ENCODE measurements at regions of chr14 and their contacts with region 1.

Region 1: DNA sequence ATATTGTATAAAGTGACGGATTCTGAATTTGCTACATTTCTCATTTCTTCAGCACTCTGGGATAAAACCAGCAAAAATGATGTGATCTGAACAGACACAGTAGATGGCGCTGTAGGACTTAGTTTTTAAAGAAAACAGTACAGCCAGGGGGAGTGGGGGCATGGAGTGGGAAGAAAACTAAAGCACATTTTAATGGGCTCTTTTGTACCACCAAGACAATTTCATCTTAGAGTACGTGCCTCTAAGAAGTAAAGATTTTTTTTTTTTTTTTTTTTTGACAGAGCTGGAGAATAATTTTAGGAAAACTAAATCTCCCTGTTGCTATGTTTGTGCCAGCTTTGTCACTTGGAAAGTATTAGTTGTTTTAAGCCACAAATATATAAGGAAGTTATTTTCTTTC is 124.4 kb downstream of the RAD51B start:
- DNase-seq: peak; percentile 71
- ATAC-seq: peak; percentile 82
- H3K4me3 ChIP-seq: no peak overlapping the region
- H3K27ac ChIP-seq: peak overlapping the region; percentile 88; the same call in 1 of the 2 replicates
- H3K4me1 ChIP-seq: peaks cover 21 to 42% of the 10 kb centered on the region in 2 experiments
- H3K27me3 ChIP-seq: no peaks in the 10 kb centered on the region
- CTCF ChIP-seq: peak; percentile 56 to 83 (median 74); a peak in 5 of 6 replicates
- POLR2A ChIP-seq: no peak
- RAD21 ChIP-seq: peak; percentile 89

Region 2: GRCh38 chr14:68042608-68043210 is 98.8 kb after region 1 on chr14:
- CTCF ChIA-PET with region 1: no interaction called
- POLR2A ChIA-PET with region 1: no interaction called
- RAD21 ChIA-PET with region 1: no interaction called
- intact Hi-C with region 1: no loop called
- DNase-seq: no peak
- ATAC-seq: no peak
- H3K4me3 ChIP-seq: no peak overlapping the region
- H3K27ac ChIP-seq: peak overlapping the region; percentile 12; the same call in 1 of the 2 replicates
- H3K4me1 ChIP-seq: peaks cover 0 to 12% of the 10 kb centered on the region in 2 experiments; a peak in 1 of 4 replicates
- H3K27me3 ChIP-seq: no peaks in the 10 kb centered on the region
- CTCF ChIP-seq: no peak
- POLR2A ChIP-seq: no peak
- RAD21 ChIP-seq: no peak

Region 3: GRCh38 chr14:68146807-68147206 is 202.9 kb after region 1 on chr14:
- CTCF ChIA-PET with region 1: interaction called, 4 read pairs
- POLR2A ChIA-PET with region 1: interaction called, 4 read pairs
- RAD21 ChIA-PET with region 1: no interaction called
- intact Hi-C with region 1: loop called (anchors 5 kb)
- DNase-seq: peak; percentile 81
- ATAC-seq: peak; percentile 87
- H3K4me3 ChIP-seq: peak overlapping the region in 1 of 2 experiments; percentile 2; a peak in 1 of 4 replicates
- H3K27ac ChIP-seq: peak overlapping the region; percentile 99
- H3K4me1 ChIP-seq: peaks cover 62% of the 10 kb centered on the region in 2 experiments
- H3K27me3 ChIP-seq: no peaks in the 10 kb centered on the region
- CTCF ChIP-seq: no peak
- POLR2A ChIP-seq: no peak
- RAD21 ChIP-seq: peak; percentile 15; the same call in 1 of the 2 replicates

Region 4: DNA sequence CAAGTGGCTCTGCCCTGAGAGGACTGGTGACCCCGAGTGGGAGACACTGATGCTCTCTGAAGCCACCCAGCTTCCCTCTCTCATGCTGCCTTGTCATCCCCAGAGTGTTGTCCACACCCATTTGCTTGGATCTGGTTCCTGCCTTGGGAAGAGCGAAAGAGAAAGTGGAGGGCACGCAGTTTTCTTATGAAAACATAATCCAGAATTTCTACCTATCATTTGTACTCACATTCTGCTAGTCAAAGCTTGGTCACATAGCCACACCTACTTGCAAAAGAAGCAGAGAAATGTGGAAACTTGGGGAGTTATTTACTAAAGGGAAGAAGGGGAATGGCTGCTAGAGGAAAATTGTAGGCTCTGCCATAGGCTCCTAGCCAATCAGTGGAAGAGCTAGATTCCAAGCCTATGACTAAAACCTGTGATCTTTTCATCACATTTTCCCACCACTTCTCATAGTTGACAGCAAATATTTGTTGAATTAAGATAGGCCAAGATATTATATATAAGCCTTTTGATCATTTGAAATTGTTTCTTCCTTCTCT is 522.6 kb after region 1 on chr14:
- CTCF ChIA-PET with region 1: no interaction called
- POLR2A ChIA-PET with region 1: no interaction called
- RAD21 ChIA-PET with region 1: no interaction called
- intact Hi-C with region 1: loop called (anchors 10 kb)
- DNase-seq: peak; percentile 78
- ATAC-seq: peak; percentile 55
- H3K4me3 ChIP-seq: peak overlapping the region; percentile 1 to 41
- H3K27ac ChIP-seq: peak overlapping the region; percentile 92
- H3K4me1 ChIP-seq: peaks cover 73 to 84% of the 10 kb centered on the region in 2 experiments
- H3K27me3 ChIP-seq: no peaks in the 10 kb centered on the region
- CTCF ChIP-seq: no peak
- POLR2A ChIP-seq: no peak
- RAD21 ChIP-seq: no peak

Region 5: GRCh38 chr14:68795597-68796417 is 851.9 kb after region 1 on chr14:
- CTCF ChIA-PET with region 1: no interaction called
- POLR2A ChIA-PET with region 1: interaction called, 4 read pairs
- RAD21 ChIA-PET with region 1: no interaction called
- intact Hi-C with region 1: loop called (anchors 2 kb)
- DNase-seq: no peak
- ATAC-seq: peak; percentile 68
- H3K4me3 ChIP-seq: peak overlapping the region; percentile 83 to 89
- H3K27ac ChIP-seq: peak overlapping the region; percentile 99
- H3K4me1 ChIP-seq: peaks cover 27 to 57% of the 10 kb centered on the region in 2 experiments
- H3K27me3 ChIP-seq: no peaks in the 10 kb centered on the region
- CTCF ChIP-seq: peak in 2 of 3 experiments; percentile 58 to 71; a peak in 4 of 6 replicates
- POLR2A ChIP-seq: no peak
- RAD21 ChIP-seq: no peak

Region 6: GRCh38 chr14:68843471-68844209 is 899.7 kb after region 1 on chr14:
- CTCF ChIA-PET with region 1: interaction called, 12 read pairs
- POLR2A ChIA-PET with region 1: no interaction called
- RAD21 ChIA-PET with region 1: no interaction called
- intact Hi-C with region 1: no loop called
- DNase-seq: peak; percentile 58
- ATAC-seq: peak; percentile 95
- H3K4me3 ChIP-seq: peak overlapping the region; percentile 23 to 50
- H3K27ac ChIP-seq: peak overlapping the region; percentile 28; the same call in 1 of the 2 replicates
- H3K4me1 ChIP-seq: peaks cover 6 to 9% of the 10 kb centered on the region in 2 experiments
- H3K27me3 ChIP-seq: no peaks in the 10 kb centered on the region
- CTCF ChIP-seq: peak; percentile 72 to 94 (median 93)
- POLR2A ChIP-seq: no peak
- RAD21 ChIP-seq: peak; percentile 85

Measured in HCT116 (cell line).